RWPE1 (cell line): ENCODE measurements at regions of chr2 and their contacts with region 1.

Region 1: DNA sequence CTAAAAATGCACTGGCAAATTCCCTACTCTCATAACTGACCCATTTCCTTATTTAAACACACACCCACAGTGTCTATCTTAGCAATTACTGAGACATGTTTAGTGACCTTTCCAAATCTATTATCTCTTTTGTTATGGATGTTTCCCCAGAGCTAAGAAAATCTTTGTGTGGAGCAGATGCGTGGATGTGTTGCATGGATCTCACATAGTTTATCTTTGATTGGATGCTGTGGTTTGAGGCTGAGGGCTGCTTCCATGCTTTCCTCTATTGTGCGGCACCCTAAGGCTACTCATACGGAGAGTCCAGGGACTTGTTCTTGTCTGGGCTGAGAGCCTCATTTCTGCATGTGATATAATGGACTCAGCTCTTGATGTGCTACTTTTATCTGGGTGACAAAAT is 4.7 kb downstream of the ANKZF1 start:
- DNase-seq: no peak
- H3K27ac ChIP-seq: no peak overlapping the region
- CTCF ChIP-seq: no peak

Region 2: GRCh38 chr2:219002395-219003266 is 231.7 kb before region 1 on chr2:
- CTCF ChIA-PET with region 1: interaction called, 13 read pairs
- POLR2A ChIA-PET with region 1: no interaction called
- DNase-seq: no peak
- H3K27ac ChIP-seq: no peak overlapping the region
- CTCF ChIP-seq: peak; percentile 22

Region 3: DNA sequence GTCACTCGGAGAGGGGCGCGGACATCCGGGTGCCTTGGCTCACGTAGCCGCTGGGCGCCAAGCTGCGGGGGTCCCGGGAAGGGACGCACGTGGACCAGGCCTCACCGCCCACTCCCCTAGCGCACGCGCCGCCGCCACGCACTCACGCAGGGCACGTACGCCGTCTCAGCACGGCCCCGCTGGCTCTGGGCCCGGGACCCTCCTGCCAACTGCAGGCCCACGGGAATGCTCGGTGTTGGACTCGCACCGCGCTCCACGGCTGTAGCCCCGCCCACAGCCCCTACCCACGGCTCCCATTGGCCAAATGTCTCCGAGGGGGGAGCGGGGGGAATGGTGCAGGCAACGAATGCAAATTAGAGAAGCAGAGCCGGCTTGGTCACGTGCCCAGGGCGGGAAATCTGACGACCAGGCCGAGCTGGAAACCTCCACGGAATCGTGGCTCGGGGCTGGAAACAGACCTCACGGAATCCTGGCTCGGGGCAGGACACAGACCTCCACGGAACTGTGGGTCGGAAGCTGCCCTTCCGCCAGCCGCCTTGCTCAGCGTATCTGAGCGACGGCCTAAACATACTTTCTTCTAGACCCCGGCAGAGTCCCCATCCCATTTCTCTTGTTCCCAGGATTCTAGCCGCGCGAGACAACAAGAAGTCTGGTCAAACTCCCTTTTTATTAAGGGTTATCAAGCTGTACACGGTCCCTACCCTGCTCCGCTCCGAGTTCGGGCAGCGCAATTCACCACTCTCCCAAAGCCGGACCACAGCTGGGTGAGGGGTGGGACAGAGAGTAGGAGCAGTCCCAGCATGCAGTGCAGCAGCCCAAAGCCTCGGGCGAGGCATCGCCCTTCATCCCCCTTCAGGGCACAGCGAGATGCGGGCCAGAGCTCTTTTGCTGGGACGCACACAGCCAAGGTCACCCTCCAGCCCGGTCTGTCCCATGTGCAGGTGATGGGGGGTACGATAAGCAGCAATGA is 15.3 kb before region 1 on chr2 and contains the start of gene ABCB6:
- CTCF ChIA-PET with region 1: interaction called, 3 read pairs
- POLR2A ChIA-PET with region 1: interaction called, 11 read pairs
- DNase-seq: peak; percentile 94
- H3K27ac ChIP-seq: peak within 1 kb of the TSS; percentile 99
- CTCF ChIP-seq: no peak

Region 4: DNA sequence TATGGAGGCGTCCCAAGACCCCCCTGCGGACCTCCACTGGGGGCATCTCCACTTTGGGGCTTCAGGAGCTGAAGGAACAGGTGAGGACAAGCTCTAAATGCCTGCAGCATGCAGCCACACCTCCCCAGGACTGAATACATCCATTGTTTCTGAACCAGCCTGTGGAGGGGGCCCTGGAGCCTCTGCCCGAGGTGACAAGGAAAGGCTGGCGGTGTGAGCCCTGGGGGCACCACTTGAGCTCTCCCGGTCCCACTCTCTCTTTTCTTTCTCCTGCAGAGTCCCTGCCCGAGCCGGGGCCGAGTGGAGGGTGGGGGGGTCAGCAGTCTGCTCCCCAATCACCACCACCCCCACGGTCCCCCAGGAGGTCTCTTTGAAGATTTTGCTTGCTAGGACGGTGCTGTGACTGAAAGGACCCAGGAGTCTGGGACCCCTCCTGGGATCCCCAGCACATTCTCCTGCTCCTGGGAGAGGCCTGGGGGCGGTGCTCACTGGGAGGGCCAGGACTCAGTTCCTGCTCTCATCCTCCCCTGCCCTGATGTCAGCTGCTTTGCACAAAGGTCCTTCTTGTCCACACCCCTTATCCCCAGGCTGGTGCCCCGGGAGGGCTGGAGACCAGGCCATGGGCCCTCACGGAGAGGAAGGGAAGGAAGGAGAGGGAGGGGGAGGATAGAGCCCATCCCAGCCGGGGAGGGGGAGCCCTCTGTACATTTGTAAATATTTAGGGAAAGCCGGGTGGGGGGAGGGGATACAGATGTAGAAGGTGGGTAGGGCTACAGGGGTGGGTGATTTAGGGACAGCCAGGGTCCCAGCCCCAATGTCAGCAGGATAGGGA is 303.5 kb after region 1 on chr2:
- CTCF ChIA-PET with region 1: no interaction called
- POLR2A ChIA-PET with region 1: no interaction called
- DNase-seq: no peak
- H3K27ac ChIP-seq: peak overlapping the region; percentile 64
- CTCF ChIP-seq: no peak